PC-3 (cell line): ENCODE measurements at regions of chr5 and their contacts with region 1.

Region 1: GRCh38 chr5:13606034-13606620 is 338.4 kb downstream of the DNAH5 start:
- DNase-seq: peak; percentile 97
- ATAC-seq: peak; percentile 98
- H3K4me3 ChIP-seq: no peak overlapping the region
- H3K27ac ChIP-seq: peak overlapping the region; percentile 83
- H3K4me1 ChIP-seq: peaks cover 23% of the 10 kb centered on the region
- H3K27me3 ChIP-seq: no peaks in the 10 kb centered on the region
- CTCF ChIP-seq: no peak

Region 2: GRCh38 chr5:13553896-13554295 is 52.2 kb before region 1 on chr5:
- CTCF ChIA-PET with region 1: no interaction called
- POLR2A ChIA-PET with region 1: no interaction called
- intact Hi-C with region 1: no loop called
- DNase-seq: peak; percentile 58
- ATAC-seq: no peak
- H3K4me3 ChIP-seq: no peak overlapping the region
- H3K27ac ChIP-seq: no peak overlapping the region
- H3K4me1 ChIP-seq: no peaks in the 10 kb centered on the region
- H3K27me3 ChIP-seq: no peaks in the 10 kb centered on the region
- CTCF ChIP-seq: no peak

Region 3: DNA sequence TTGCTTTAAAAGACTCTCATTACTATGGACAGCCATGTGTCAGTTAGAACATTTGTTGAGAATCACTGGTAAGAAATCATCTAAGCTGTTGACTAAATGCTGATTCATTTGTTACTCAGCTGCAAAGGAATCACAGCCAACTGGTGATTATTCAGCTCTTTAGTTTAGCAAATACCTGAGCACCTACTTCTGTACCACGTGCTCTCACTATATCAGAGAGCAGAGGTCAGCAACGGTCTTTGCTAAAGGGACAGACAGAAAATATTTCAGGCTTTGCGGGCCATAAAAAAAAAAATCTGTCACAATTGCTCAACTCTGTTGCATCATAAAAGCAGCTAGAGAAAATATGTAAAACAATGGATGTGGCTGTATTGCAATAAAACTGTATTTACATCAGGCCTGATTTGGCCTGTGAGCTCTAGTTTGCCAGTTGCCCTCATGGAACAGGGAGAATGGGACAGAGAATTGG is 39.2 kb before region 1 on chr5:
- CTCF ChIA-PET with region 1: no interaction called
- POLR2A ChIA-PET with region 1: no interaction called
- intact Hi-C with region 1: loop called (anchors 5 kb)
- DNase-seq: peak; percentile 99
- ATAC-seq: peak; percentile 68
- H3K4me3 ChIP-seq: no peak overlapping the region
- H3K27ac ChIP-seq: peak overlapping the region; percentile 95
- H3K4me1 ChIP-seq: peaks cover 32% of the 10 kb centered on the region
- H3K27me3 ChIP-seq: no peaks in the 10 kb centered on the region
- CTCF ChIP-seq: no peak

Region 4: DNA sequence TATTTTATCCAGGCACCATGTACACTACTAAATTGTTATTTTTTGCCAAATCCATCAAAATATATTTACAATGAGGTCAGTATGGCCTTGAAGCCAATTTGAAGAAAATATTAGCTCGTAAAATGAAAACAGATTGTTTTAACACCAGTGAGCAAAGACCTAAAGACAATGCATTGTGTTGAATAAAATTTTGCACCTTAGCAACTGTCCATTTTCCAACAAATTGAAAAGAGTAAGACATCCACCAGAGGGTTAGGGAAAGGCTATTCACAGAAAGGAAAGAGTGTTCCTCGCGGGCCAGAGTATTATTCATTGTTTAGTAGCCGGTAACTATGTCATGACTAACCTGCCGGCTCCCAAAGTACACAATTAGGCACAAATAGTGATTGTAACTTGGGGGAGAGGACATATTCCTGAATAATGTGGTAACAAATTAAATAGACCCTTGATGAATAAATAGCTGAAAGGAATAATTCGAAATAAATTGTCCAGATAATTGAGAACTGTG is 125.0 kb after region 1 on chr5:
- CTCF ChIA-PET with region 1: no interaction called
- POLR2A ChIA-PET with region 1: no interaction called
- intact Hi-C with region 1: loop called (anchors 5 kb)
- DNase-seq: peak; percentile 97
- ATAC-seq: peak; percentile 98
- H3K4me3 ChIP-seq: no peak overlapping the region
- H3K27ac ChIP-seq: peak overlapping the region; percentile 92
- H3K4me1 ChIP-seq: peaks cover 19% of the 10 kb centered on the region
- H3K27me3 ChIP-seq: no peaks in the 10 kb centered on the region
- CTCF ChIP-seq: no peak

Region 5: DNA sequence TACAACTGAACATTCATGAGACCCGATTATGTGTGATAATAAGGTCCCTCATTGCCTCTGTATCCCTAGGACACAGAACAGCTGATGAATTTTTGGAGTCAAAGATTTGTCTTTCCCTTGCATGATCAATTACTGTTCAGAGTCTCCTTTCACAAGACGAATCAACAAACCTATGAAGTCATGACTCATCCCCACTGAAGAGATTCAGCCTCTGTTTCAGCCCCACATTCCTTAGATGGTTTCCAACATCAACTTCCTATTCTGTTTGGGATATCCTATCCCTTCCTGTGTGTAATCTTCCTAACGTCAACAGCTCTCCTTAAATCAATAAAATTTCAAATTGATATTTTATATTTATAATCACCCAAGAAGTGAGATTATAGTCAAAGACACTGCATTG is 139.4 kb after region 1 on chr5:
- CTCF ChIA-PET with region 1: no interaction called
- POLR2A ChIA-PET with region 1: no interaction called
- intact Hi-C with region 1: loop called (anchors 5 kb)
- DNase-seq: peak; percentile 95
- ATAC-seq: peak; percentile 91
- H3K4me3 ChIP-seq: no peak overlapping the region
- H3K27ac ChIP-seq: peak overlapping the region; percentile 90
- H3K4me1 ChIP-seq: peaks cover 44% of the 10 kb centered on the region
- H3K27me3 ChIP-seq: no peaks in the 10 kb centered on the region
- CTCF ChIP-seq: no peak